Posterior vena cava (tissue), 2 donors: ENCODE measurements at regions of chrX and their contacts with region 1.

Region 1: GRCh38 chrX:18151649-18152048 is 69.0 kb downstream of the BEND2 start:
- DNase-seq: no peak

Region 2: GRCh38 chrX:17021851-17022604 is 1129.6 kb before region 1 on chrX:
- intact Hi-C with region 1: no loop called
- DNase-seq: no peak

Region 3: GRCh38 chrX:18031726-18032375 is 119.8 kb before region 1 on chrX:
- intact Hi-C with region 1: loop called in 1 of 2 experiments (anchors 10 kb)
- DNase-seq: no peak

Region 4: GRCh38 chrX:18116236-18116635 is 35.4 kb before region 1 on chrX:
- intact Hi-C with region 1: no loop called
- DNase-seq: no peak